Activated CD8-positive, alpha-beta memory T cell treated with anti-CD3 and anti-CD28 coated beads, Interleukin-2, amount 10 ng/mL, durations not matched to agents 7 days and 5 days (primary cell): ENCODE measurements at regions of chr4 and their contacts with region 1.

Region 1: DNA sequence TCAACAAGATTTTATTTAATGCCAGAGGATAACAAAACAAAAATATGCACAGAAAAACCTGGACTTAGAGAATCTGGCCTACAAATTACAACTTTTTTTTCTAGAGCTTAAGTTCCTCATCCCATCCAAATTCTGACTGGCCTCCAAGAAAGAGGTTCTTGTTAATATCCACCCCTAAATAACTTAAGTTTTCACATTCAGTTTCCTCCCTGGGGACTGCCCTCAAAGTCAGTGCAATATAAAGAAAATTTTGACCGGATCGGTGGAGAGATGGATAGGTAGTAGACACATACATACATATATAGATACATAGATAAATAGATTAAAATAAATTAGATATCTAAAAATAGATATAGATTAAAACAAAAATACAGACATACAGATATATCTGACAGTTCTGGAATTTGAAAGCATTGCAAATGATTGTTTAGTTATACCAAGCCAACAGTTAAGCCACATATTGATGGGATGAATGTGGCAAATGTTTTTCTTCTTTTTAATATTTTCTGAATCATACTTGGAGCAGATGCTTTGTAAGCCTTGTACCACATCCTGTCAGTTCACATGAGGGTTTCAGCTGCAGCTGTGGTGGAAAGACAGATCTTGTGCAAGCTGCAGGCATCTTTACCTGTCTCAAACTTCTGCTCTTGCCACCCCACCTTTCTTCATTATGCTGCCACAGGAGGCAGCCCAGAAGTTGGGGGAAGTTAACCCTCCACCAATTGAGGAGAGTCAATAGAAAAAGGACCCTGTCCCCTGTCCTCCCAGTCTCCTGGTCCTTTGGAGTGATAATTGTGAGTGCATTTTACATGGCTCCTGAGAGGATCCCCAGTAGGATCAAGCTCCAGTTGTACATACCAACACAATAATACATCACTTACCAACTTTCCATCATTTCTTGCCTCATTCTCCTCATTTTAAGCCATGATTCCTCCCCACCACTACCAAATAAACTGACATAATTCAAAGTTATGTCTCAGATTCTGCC is 58.5 kb upstream of the PRDM8 start:
- DNase-seq: peak; percentile 88
- ATAC-seq: peak; percentile 95
- H3K4me3 Mint-ChIP-seq: peak overlapping the region; percentile 33
- H3K27ac Mint-ChIP-seq: peak overlapping the region; percentile 87
- H3K4me1 Mint-ChIP-seq: peaks cover 60% of the 10 kb centered on the region
- H3K27me3 Mint-ChIP-seq: no peaks in the 10 kb centered on the region

Region 2: GRCh38 chr4:80173401-80173800 is 34.6 kb after region 1 on chr4:
- CTCF ChIA-PET with region 1: interaction called, 12 read pairs
- DNase-seq: peak; percentile 83
- ATAC-seq: peak; percentile 90
- H3K4me3 Mint-ChIP-seq: peak overlapping the region; percentile 26
- H3K27ac Mint-ChIP-seq: peak overlapping the region; percentile 94
- H3K4me1 Mint-ChIP-seq: peaks cover 56% of the 10 kb centered on the region
- H3K27me3 Mint-ChIP-seq: no peaks in the 10 kb centered on the region